Right ventricle myocardium inferior (tissue), 1 donor: ENCODE measurements at regions of chr1 and their contacts with region 1.

Region 1: GRCh38 chr1:20521960-20522861 is 14.3 kb upstream of the MUL1 start:
- DNase-seq: peak; percentile 63
- ATAC-seq: peak; percentile 69

Region 2: DNA sequence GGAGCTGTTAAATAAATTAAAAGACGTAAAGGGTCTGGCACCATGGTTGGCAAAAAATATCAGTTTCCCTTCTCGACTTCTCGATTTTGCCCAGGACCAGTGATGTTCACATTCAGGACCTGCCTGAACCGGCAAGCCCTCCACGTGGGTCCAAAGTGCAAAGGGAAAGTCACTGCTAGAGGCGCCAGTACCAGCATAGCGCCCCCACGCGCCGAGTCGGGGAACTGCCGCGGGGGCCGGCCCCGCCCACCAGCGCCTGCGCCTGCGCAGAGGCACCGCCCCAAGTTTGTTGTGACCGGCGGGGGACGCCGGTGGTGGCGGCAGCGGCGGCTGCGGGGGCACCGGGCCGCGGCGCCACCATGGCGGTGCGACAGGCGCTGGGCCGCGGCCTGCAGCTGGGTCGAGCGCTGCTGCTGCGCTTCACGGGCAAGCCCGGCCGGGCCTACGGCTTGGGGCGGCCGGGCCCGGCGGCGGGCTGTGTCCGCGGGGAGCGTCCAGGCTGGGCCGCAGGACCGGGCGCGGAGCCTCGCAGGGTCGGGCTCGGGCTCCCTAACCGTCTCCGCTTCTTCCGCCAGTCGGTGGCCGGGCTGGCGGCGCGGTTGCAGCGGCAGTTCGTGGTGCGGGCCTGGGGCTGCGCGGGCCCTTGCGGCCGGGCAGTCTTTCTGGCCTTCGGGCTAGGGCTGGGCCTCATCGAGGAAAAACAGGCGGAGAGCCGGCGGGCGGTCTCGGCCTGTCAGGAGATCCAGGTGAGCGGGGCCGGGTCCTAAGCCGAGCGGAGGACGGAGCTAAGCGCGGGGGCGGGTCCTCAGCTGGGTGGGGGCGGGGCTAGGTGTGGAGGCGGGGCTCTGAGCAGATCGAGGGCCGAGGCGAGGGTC is 111.2 kb after region 1 on chr1 and contains the start of gene PINK1:
- intact Hi-C with region 1: loop called (anchors 1 kb)
- DNase-seq: peak; percentile 94
- ATAC-seq: peak; percentile 91
- total RNA-seq, gene PINK1: 288 TPM

Region 3: DNA sequence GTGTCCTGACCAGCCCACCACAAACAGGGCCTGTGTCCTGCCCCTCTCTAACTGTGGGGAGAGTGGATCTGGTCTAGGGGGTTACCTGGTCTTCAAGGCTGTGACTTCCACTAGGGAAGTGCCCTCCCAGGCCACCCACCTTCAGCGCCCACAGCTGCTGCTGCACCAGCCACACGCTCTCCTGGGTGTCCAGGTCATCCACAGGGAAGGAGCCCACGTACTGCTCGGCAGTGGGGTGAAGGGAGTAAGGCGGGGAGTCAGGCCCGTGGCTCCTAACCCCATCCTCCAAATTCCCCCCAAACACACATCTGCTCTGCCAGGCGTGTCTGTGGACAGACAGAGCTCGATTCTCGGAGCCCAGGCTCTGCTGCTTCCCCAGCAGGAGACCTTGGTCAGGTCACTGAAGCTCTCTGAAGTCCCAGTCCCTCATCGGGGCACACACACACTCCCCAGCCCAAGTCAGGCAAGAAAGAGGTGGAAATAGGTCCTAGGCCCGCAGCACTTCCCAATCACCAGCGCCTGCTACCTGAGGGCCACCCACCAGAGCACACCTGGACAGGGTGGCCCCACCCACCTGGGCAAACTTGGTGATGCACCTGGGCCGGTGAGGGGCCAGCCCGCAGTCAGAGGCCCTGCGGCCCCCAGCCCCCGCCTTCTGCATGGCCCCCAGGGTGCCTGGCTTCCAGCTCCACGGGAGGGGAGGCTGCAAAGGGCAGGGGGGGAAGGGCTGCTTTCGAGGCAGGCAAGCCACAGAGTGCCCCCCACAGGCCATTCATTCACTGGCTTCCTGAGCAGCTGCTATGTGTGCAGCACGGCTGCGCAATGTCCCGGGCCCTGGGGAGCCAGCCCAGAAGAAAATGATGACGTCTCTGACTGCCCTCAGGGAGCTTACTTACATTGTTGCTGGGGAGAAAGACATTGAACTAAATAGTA is 205.4 kb after region 1 on chr1:
- intact Hi-C with region 1: loop called (anchors 5 kb)
- DNase-seq: no peak
- ATAC-seq: no peak